Activated naive CD4-positive, alpha-beta T cell treated with anti-CD3 and anti-CD28 coated beads for 36 hours (primary cell): ENCODE measurements at regions of chr3 and their contacts with region 1.

Region 1: DNA sequence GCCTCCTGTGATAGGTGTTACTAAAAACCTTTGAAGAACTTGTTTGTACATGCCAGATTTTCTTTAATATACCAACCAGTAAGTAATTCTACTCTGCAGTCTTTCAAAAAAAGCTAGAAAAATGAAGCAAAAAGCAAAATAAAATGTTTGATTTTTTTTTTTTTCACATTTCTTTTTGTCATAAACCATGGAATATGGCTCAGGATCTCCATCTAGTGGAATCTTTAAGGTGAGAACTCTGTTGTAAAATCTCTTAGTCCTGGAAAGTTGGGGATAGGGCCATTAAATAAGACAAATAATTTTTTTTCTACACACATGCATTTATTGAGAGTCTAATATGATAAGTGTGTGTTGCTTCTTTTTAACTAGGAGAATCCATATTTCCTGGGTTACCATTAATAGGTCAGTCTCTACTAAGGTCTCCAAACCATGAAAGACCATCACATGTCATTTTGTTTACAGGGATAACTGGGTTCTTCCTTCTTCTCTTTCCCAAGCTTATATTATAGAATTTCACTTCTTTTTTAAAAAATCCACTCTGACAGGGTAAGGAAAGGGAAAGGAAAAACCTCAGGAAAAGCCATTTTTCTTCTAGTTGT is 84.6 kb downstream of the SLC9A9 start:
- DNase-seq: no peak
- H3K4me3 Mint-ChIP-seq: no peak overlapping the region
- H3K27ac Mint-ChIP-seq: no peak overlapping the region
- H3K4me1 Mint-ChIP-seq: peaks cover 21% of the 10 kb centered on the region
- H3K27me3 Mint-ChIP-seq: no peaks in the 10 kb centered on the region

Region 2: DNA sequence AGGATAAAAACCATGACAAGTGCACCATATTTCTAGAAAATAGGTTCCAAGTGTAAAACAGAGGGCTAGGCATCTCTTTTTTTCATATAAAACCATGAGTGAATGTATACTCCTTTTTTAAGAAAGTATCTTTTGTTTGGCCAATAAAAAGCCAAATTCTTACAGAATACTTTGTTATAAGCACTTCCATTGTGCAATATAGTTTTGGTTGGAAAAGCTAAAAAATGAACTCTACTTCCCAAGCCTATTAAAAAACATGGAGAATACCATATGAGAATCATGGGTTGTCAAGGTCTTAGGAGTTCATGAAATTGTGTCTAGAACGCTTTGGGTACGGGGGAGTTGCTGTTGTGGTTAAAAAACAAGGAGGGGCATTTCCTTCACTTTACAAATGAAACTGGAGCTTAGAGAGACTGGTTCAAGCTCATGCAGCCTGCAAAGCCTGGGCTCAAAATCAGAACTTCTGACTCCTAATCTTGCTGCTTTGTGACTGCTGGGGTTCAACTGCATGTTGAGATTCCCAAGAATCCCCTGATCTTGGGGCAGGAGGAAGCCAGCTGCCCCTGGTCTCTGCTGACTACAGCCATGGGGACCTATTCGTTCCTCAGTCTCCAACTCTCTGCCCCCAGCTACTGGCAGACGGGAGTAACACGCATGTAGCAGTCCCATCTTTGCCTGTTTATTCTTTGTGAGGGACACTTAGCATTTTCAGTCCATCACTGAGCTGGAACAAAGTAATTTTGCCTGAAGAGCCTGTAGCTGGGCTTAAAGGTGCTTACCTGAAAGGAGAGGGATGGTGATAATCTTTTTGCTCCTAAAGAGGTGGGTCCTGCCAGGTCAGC is 415.0 kb before region 1 on chr3:
- CTCF ChIA-PET with region 1: no interaction called
- intact Hi-C with region 1: loop called (anchors 5 kb)
- DNase-seq: no peak
- H3K4me3 Mint-ChIP-seq: no peak overlapping the region
- H3K27ac Mint-ChIP-seq: no peak overlapping the region
- H3K4me1 Mint-ChIP-seq: peaks cover 35% of the 10 kb centered on the region
- H3K27me3 Mint-ChIP-seq: no peaks in the 10 kb centered on the region

Region 3: GRCh38 chr3:143433787-143434378 is 329.8 kb before region 1 on chr3:
- CTCF ChIA-PET with region 1: no interaction called
- intact Hi-C with region 1: loop called (anchors 1 kb)
- DNase-seq: peak; percentile 64
- H3K4me3 Mint-ChIP-seq: no peak overlapping the region
- H3K27ac Mint-ChIP-seq: no peak overlapping the region
- H3K4me1 Mint-ChIP-seq: no peaks in the 10 kb centered on the region
- H3K27me3 Mint-ChIP-seq: no peaks in the 10 kb centered on the region

Region 4: GRCh38 chr3:143644370-143645089 is 119.1 kb before region 1 on chr3:
- CTCF ChIA-PET with region 1: no interaction called
- intact Hi-C with region 1: loop called (anchors 2 kb)
- DNase-seq: peak; percentile 48
- H3K4me3 Mint-ChIP-seq: no peak overlapping the region
- H3K27ac Mint-ChIP-seq: no peak overlapping the region
- H3K4me1 Mint-ChIP-seq: no peaks in the 10 kb centered on the region
- H3K27me3 Mint-ChIP-seq: no peaks in the 10 kb centered on the region

Region 5: DNA sequence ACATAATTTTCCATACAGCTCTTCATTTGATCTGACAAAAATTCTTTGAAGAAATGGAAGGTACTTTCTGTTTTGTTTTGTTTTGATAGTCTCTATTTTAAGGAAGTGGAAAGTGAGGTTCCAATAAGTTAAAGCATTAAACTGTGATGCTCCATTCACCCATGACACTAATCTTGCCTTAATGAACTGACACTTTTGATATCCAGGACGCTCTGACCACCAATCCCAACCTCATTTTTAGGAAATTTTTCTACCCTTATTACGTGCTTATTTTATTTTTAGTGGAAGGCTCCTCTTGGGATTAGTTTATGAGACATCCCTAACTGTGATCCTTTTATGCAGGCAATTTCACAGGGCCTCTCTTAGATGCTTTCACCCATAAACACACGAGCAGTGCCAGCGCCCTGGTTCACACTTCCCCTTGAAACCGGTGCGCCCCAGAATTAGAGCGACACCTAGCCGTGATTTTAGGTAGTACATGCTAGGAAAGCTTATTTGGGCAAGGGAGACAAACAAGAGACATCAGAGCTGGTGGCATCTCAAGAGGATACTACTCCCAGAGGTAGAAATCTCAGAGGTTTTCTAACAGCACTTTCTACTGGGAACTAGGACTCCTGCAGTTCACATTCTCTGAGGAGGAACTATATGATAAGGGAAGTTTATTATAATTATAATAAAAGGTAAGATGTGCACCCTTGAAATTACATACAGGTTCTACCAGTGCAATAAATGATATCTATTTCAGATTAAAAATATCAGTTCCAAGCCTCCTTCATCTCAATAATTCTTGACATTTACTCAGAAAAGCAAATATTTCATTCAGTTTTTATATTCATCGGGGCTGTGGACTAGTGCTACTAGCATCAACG is 89.3 kb before region 1 on chr3:
- CTCF ChIA-PET with region 1: interaction called, 3 read pairs
- intact Hi-C with region 1: loop called (anchors 1 kb)
- DNase-seq: peak; percentile 89
- H3K4me3 Mint-ChIP-seq: peak overlapping the region; percentile 46
- H3K27ac Mint-ChIP-seq: no peak overlapping the region
- H3K4me1 Mint-ChIP-seq: peaks cover 10% of the 10 kb centered on the region
- H3K27me3 Mint-ChIP-seq: no peaks in the 10 kb centered on the region